Activated CD4-positive, alpha-beta T cell treated with anti-CD3 and anti-CD28 coated beads, Interleukin-2, amount 10 ng/mL, durations not matched to agents 24 days and 14 days (primary cell): ENCODE measurements at regions of chr20 and their contacts with region 1.

Region 1: GRCh38 chr20:58209652-58210397 is 18.6 kb downstream of the ANKRD60 start:
- DNase-seq: peak; percentile 96
- H3K4me3 Mint-ChIP-seq: no peak overlapping the region
- H3K27ac Mint-ChIP-seq: peak overlapping the region; percentile 39
- H3K4me1 Mint-ChIP-seq: peaks cover 8% of the 10 kb centered on the region
- H3K27me3 Mint-ChIP-seq: peaks cover 23% of the 10 kb centered on the region

Region 2: GRCh38 chr20:57514273-57514751 is 695.5 kb before region 1 on chr20:
- intact Hi-C with region 1: loop called (anchors 5 kb)
- DNase-seq: peak; percentile 78
- H3K4me3 Mint-ChIP-seq: no peak overlapping the region
- H3K27ac Mint-ChIP-seq: no peak overlapping the region
- H3K4me1 Mint-ChIP-seq: no peaks in the 10 kb centered on the region
- H3K27me3 Mint-ChIP-seq: peaks cover 22% of the 10 kb centered on the region

Region 3: GRCh38 chr20:58192567-58192966 is 17.3 kb before region 1 on chr20:
- intact Hi-C with region 1: no loop called
- DNase-seq: peak; percentile 79
- H3K4me3 Mint-ChIP-seq: no peak overlapping the region
- H3K27ac Mint-ChIP-seq: no peak overlapping the region
- H3K4me1 Mint-ChIP-seq: no peaks in the 10 kb centered on the region
- H3K27me3 Mint-ChIP-seq: peaks cover 4% of the 10 kb centered on the region